HepG2 (cell line): ENCODE measurements at regions of chr6 and their contacts with region 1.

Region 1: DNA sequence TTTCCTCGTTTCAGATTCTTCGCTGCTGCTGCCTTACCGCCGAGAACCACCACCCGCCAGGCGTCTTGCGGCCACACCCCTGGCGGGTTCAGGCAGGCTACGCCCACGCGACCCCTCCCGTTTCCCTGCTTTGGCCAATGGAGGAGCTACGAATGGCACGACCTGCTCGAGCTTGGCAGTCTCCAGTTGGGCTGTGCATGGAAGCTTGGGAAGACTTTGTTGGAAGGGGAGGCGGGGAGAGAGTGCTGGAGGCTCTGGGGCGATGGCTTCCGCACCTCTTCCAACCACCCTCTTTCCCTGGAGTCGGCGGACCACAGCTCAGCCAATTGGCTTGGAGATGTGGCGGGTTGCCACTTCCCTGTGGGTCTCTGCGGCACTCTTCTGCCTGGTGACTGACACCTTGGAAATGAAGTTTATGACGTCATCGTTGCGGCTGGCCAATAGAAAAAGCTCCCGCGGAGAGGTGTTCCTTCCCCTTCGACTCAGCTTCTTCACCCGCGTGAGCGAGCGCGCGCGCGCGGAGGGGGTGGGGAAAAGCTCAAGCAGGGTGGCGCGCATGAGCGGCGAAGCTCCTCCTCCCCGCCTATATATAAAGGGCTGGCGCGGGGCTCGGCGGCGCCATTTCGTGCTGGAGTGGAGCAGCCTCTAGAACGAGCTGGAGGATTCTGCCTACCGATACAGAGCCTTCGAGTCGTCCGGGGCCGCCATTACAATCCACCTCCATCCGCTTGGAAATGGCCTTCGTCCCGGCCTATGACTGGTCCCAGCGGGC is 3.4 kb downstream of the BRD2 start:
- DNase-seq: peak; percentile 98
- ATAC-seq: peak; percentile 43
- H3K4me3 ChIP-seq: peak overlapping the region; percentile 90 to 98 (median 95)
- H3K27ac ChIP-seq: peak overlapping the region; percentile 99
- H3K4me1 ChIP-seq: peaks cover 47% of the 10 kb centered on the region
- H3K27me3 ChIP-seq: peaks cover 0 to 4% of the 10 kb centered on the region in 2 experiments; a peak in 1 of 5 replicates
- CTCF ChIP-seq: 0 out of 2 replicates have a peak, but pooled peaks have one; percentile 17
- EP300 ChIP-seq: peak; percentile 17 to 45; a peak in 2 of 4 replicates
- POLR2A ChIP-seq: peak in 1 of 2 experiments; percentile 100; a peak in 2 of 4 replicates
- RAD21 ChIP-seq: peak; percentile 62

Region 2: DNA sequence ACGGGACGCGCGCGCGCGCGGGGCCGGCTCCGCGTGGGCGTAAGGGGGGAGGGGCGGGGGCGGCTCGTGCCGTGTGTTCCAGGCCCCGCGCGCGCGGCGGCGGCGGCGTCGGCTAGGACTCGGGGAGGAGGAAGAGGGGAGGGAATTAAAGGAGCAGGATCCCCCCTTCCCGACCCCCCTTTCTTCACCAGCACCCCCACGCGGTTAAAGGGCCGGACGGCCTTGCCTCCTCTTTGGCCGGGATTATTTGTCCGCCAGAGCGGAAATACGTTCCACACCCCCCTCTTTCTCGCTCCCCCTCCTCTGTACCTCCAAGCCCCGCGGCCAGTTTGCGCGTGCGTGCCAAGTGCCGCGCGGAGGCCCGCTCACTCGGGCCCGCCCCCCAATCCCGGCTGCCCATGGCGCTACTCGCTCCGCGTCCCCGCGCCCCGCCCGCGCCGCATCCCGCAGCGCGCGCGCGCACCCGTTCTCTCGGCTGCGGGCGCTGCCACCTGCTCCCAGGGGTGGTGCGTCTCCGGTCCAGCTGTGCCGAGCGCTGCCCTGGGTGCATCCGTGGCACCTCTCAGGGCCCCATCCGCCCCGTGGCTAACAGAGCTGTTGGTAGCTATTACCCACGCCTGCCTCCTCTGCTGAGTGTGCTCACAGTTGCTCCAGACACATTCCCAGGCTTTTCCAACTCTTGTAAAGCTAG is 1069.7 kb before region 1 on chr6 and contains the start of gene ZBTB12:
- CTCF ChIA-PET with region 1: no interaction called
- POLR2A ChIA-PET with region 1: interaction called, 4 read pairs
- in situ Hi-C with region 1: loop called (anchors 25 kb)
- intact Hi-C with region 1: no loop called
- DNase-seq: peak; percentile 96
- ATAC-seq: peak; percentile 76
- H3K4me3 ChIP-seq: peak within 1 kb of the TSS; percentile 65 to 78 (median 67)
- H3K27ac ChIP-seq: peak within 1 kb of the TSS; percentile 60
- H3K4me1 ChIP-seq: peaks cover 51% of the 10 kb centered on the region
- H3K27me3 ChIP-seq: peaks cover 1 to 13% of the 10 kb centered on the region in 2 experiments; a peak in 2 of 5 replicates
- CTCF ChIP-seq: peak; percentile 48
- EP300 ChIP-seq: peak in 1 of 2 experiments; percentile 30; a peak in 1 of 4 replicates
- POLR2A ChIP-seq: peak; percentile 58 to 78; a peak in 3 of 4 replicates
- RAD21 ChIP-seq: peak; percentile 88
- total RNA-seq, gene ZBTB12: 6.0 and 6.8 TPM in 2 replicates

Region 3: DNA sequence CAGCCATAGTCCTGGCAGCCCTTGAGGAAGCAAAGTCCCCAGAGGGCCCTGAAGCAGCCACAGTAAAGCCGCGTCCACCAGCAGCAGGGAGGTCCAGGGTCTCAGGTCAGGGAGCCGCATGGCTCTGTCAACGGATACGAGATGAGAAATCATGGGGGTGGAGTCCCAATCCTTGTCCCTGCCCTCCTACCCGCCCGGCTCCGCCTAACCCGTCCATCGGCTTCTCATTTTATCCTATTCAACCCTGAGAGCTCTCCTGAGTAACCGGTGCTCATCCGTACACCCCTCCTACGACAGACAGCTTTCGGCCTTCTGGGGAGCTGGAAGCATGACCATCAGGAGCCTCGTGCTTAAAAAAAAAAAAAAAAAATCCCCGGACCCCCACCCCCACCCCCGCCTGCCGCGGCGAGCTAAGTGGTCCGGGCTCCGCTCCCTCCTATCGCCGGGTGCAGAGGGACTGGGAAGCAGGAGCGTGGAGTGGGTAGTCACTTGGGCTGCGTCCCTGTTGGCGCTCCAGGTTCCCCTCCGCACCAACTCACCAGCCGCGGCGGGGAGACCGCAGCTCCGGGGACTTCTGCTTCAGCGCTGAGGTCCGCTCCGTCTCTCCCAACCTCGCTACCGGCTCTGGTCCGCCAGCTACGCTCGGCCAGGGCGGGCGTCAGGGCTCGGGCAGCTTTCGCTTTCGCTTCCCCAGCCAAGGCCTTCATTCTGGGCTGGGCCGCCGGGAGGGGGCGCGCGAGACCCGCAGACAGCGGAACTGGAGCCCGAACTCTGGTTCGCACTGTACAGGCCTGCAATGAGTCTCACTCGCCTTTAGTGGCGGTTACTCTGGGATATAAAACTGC is 133.4 kb before region 1 on chr6 and contains the start of gene TAP2:
- CTCF ChIA-PET with region 1: no interaction called
- POLR2A ChIA-PET with region 1: interaction called, 56 read pairs
- in situ Hi-C with region 1: no loop called
- intact Hi-C with region 1: no loop called
- DNase-seq: peak; percentile 89
- ATAC-seq: peak; percentile 97
- H3K4me3 ChIP-seq: peak within 1 kb of the TSS; percentile 82 to 87 (median 86)
- H3K27ac ChIP-seq: peak within 1 kb of the TSS; percentile 80
- H3K4me1 ChIP-seq: peaks cover 24% of the 10 kb centered on the region
- H3K27me3 ChIP-seq: no peaks in the 10 kb centered on the region
- CTCF ChIP-seq: peak; percentile 99
- EP300 ChIP-seq: no peak
- POLR2A ChIP-seq: peak; percentile 60 to 73
- RAD21 ChIP-seq: peak; percentile 99
- total RNA-seq, gene TAP2: 9.8 and 17.6 TPM in 2 replicates

Region 4: GRCh38 chr6:32894080-32895005 is 77.4 kb before region 1 on chr6:
- CTCF ChIA-PET with region 1: no interaction called
- POLR2A ChIA-PET with region 1: interaction called, 106 read pairs
- in situ Hi-C with region 1: loop called (anchors 5 kb)
- intact Hi-C with region 1: loop called (anchors 5 kb)
- DNase-seq: peak; percentile 90
- ATAC-seq: peak; percentile 100
- H3K4me3 ChIP-seq: peak overlapping the region; percentile 66 to 90 (median 74)
- H3K27ac ChIP-seq: peak overlapping the region; percentile 64
- H3K4me1 ChIP-seq: peaks cover 25% of the 10 kb centered on the region
- H3K27me3 ChIP-seq: no peaks in the 10 kb centered on the region; a peak in 1 of 5 replicates
- CTCF ChIP-seq: peak; percentile 39
- EP300 ChIP-seq: no peak
- POLR2A ChIP-seq: peak; percentile 54 to 87; a peak in 3 of 4 replicates
- RAD21 ChIP-seq: no peak

Region 5: GRCh38 chr6:32984605-32985389 is 13.0 kb after region 1 on chr6:
- CTCF ChIA-PET with region 1: no interaction called
- POLR2A ChIA-PET with region 1: interaction called, 305 read pairs
- in situ Hi-C with region 1: no loop called
- intact Hi-C with region 1: no loop called
- DNase-seq: peak; percentile 84
- ATAC-seq: peak; percentile 73
- H3K4me3 ChIP-seq: no peak overlapping the region
- H3K27ac ChIP-seq: no peak overlapping the region
- H3K4me1 ChIP-seq: no peaks in the 10 kb centered on the region
- H3K27me3 ChIP-seq: peaks cover 0 to 6% of the 10 kb centered on the region in 2 experiments; a peak in 2 of 5 replicates
- CTCF ChIP-seq: peak; percentile 96
- EP300 ChIP-seq: no peak
- POLR2A ChIP-seq: no peak
- RAD21 ChIP-seq: peak; percentile 90

Region 6: DNA sequence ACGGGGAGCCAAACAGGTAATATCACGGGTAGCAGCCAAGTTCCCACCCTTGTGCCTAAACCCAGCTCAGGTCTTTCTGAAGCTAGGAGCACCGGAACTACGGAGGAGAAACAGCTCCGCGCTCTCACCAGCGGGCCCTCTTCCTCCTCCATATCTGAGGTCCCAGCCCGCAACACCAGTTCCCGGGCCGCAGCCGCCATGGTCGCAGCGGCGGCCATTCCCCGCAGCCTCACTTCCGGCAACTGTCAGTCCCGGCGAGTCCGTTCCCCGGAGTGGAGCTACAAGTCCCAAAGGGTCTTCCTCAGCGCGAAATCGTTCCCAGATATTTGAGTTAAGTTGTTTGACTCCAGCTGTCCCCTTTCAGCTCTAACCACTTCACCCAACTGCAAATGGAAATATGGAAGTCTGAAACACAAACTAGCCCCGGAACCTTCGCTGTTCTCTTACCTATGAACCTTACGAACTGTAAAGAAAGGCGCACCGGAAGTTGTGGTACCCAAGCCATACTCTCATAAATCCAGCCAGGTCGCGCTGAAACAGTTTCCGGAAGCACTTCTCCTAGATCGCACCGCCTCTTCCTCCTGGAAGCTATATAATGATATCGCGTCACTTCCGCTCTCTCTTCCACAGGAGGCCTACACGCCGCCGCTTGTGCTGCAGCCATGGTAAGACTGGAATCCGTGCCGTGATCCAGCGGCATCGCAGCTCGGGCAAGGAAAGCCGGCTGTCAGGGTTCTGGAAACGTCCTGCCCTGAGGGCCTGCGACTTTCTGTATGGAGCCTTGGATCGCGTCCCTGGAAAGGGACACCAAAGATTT is 299.9 kb after region 1 on chr6 and contains the starts of genes RPS18 and VPS52:
- CTCF ChIA-PET with region 1: no interaction called
- POLR2A ChIA-PET with region 1: interaction called, 31 read pairs
- in situ Hi-C with region 1: no loop called
- intact Hi-C with region 1: no loop called
- DNase-seq: peak; percentile 100
- ATAC-seq: peak; percentile 92
- H3K4me3 ChIP-seq: peak within 1 kb of the TSS; percentile 75 to 89 (median 82)
- H3K27ac ChIP-seq: peak within 1 kb of the TSS; percentile 95
- H3K4me1 ChIP-seq: peaks cover 48% of the 10 kb centered on the region
- H3K27me3 ChIP-seq: no peaks in the 10 kb centered on the region; a peak in 1 of 5 replicates
- CTCF ChIP-seq: no peak
- EP300 ChIP-seq: peak in 1 of 2 experiments; percentile 10; a peak in 1 of 4 replicates
- POLR2A ChIP-seq: peak; percentile 99
- RAD21 ChIP-seq: peak; percentile 42
- total RNA-seq, gene RPS18: 3,896 and 4,448 TPM in 2 replicates
- total RNA-seq, gene VPS52: 40.2 and 48.9 TPM in 2 replicates

Region 7: GRCh38 chr6:34260576-34261267 is 1289.0 kb after region 1 on chr6:
- CTCF ChIA-PET with region 1: no interaction called
- POLR2A ChIA-PET with region 1: no interaction called
- in situ Hi-C with region 1: no loop called
- intact Hi-C with region 1: no loop called
- DNase-seq: no peak
- ATAC-seq: peak; percentile 22; the same call in 1 of the 3 replicates
- H3K4me3 ChIP-seq: no peak overlapping the region
- H3K27ac ChIP-seq: no peak overlapping the region
- H3K4me1 ChIP-seq: no peaks in the 10 kb centered on the region; the same call in 1 of the 2 replicates
- H3K27me3 ChIP-seq: no peaks in the 10 kb centered on the region
- CTCF ChIP-seq: no peak
- EP300 ChIP-seq: no peak
- POLR2A ChIP-seq: no peak
- RAD21 ChIP-seq: no peak